Activated CD8-positive, alpha-beta T cell treated with anti-CD3 and anti-CD28 coated beads for 36 hours (primary cell): ENCODE measurements at regions of chr1 and their contacts with region 1.

Region 1: GRCh38 chr1:93304716-93305138 is 41.0 kb upstream of the DR1 start:
- DNase-seq: peak; percentile 61
- ATAC-seq: peak; percentile 53
- H3K4me3 Mint-ChIP-seq: no peak overlapping the region
- H3K27ac Mint-ChIP-seq: no peak overlapping the region
- H3K4me1 Mint-ChIP-seq: no peaks in the 10 kb centered on the region
- H3K27me3 Mint-ChIP-seq: no peaks in the 10 kb centered on the region
- CTCF ChIP-seq: peak; percentile 89

Region 2: GRCh38 chr1:92944901-92945747 is 359.6 kb before region 1 on chr1:
- CTCF ChIA-PET with region 1: no interaction called
- POLR2A ChIA-PET with region 1: no interaction called
- intact Hi-C with region 1: no loop called
- DNase-seq: no peak
- ATAC-seq: no peak
- H3K4me3 Mint-ChIP-seq: no peak overlapping the region
- H3K27ac Mint-ChIP-seq: no peak overlapping the region
- H3K4me1 Mint-ChIP-seq: peaks cover 54% of the 10 kb centered on the region
- H3K27me3 Mint-ChIP-seq: no peaks in the 10 kb centered on the region
- CTCF ChIP-seq: no peak

Region 3: DNA sequence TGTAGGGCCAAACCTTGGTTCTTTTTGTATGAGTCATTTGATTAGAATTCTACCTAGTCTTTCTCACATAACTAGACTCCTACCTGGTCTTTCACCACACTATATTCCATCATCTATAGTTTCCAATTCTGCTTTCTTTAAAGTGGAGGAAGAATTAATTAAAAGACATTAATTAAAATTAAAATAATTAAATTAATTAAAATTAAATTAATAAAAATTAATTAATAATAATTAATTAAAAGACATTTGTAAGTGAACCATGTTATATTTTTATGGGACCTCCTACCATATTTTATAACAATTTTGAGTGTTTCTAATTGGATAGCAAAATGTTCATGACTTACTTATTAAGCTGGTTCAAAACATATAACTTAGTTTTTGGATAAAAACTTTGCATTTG is 46.8 kb before region 1 on chr1:
- CTCF ChIA-PET with region 1: interaction called, 13 read pairs
- POLR2A ChIA-PET with region 1: no interaction called
- intact Hi-C with region 1: no loop called
- DNase-seq: no peak
- ATAC-seq: no peak
- H3K4me3 Mint-ChIP-seq: no peak overlapping the region
- H3K27ac Mint-ChIP-seq: no peak overlapping the region
- H3K4me1 Mint-ChIP-seq: peaks cover 2% of the 10 kb centered on the region
- H3K27me3 Mint-ChIP-seq: no peaks in the 10 kb centered on the region
- CTCF ChIP-seq: no peak

Region 4: GRCh38 chr1:93317207-93317606 is 12.5 kb after region 1 on chr1:
- CTCF ChIA-PET with region 1: interaction called, 25 read pairs
- POLR2A ChIA-PET with region 1: no interaction called
- intact Hi-C with region 1: no loop called
- DNase-seq: no peak
- ATAC-seq: no peak
- H3K4me3 Mint-ChIP-seq: no peak overlapping the region
- H3K27ac Mint-ChIP-seq: no peak overlapping the region
- H3K4me1 Mint-ChIP-seq: peaks cover 2% of the 10 kb centered on the region
- H3K27me3 Mint-ChIP-seq: no peaks in the 10 kb centered on the region
- CTCF ChIP-seq: no peak

Region 5: DNA sequence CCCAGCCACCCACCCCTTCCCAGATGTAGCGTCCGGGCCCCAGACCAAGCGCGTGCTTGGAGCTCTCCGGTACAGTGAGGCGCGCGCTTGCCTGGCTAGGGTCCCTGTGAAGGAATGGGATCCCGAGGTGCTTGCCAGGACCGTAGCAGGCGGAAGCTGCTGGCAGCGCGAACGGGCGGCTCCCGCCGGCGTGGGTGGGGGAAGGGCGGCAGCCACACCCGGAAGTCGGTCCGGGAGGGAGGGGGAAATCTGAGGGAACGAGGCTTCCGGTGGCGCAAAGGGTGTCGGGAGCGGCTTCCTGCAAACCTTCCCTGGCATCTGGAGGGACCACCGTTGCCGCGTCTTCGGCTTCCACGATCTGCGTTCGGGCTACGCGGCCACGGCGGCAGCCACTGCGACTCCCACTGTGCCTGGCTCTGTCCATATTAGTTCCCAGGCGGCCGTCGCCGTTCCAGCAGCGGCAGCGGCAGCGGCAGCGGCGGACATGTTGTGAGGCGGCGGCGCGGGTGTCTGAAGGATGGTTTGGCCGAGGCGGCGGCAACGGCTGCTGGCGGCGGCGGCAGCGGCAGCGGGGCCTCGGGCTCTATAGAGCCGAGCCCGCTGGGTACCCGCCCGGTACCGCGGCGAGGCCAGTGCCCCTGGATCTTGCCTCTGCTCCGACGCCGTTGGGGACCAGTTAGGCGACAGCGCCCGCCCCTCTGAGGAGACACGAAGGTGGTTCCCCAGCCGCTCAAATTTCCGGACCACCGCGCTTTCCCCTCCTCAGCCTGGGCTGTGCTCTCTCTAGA is 41.1 kb after region 1 on chr1 and contains the start of gene DR1:
- CTCF ChIA-PET with region 1: interaction called, 15 read pairs
- POLR2A ChIA-PET with region 1: interaction called, 4 read pairs
- intact Hi-C with region 1: no loop called
- DNase-seq: peak; percentile 92
- ATAC-seq: peak; percentile 84
- H3K4me3 Mint-ChIP-seq: peak within 1 kb of the TSS; percentile 86
- H3K27ac Mint-ChIP-seq: peak within 1 kb of the TSS; percentile 97
- H3K4me1 Mint-ChIP-seq: peaks cover 25% of the 10 kb centered on the region
- H3K27me3 Mint-ChIP-seq: no peaks in the 10 kb centered on the region
- CTCF ChIP-seq: no peak
- total RNA-seq, gene DR1: 71.3 to 79.2 TPM

Region 6: GRCh38 chr1:93374334-93375106 is 69.8 kb after region 1 on chr1:
- CTCF ChIA-PET with region 1: interaction called, 14 read pairs
- POLR2A ChIA-PET with region 1: no interaction called
- intact Hi-C with region 1: no loop called
- DNase-seq: no peak
- ATAC-seq: no peak
- H3K4me3 Mint-ChIP-seq: no peak overlapping the region
- H3K27ac Mint-ChIP-seq: no peak overlapping the region
- H3K4me1 Mint-ChIP-seq: no peaks in the 10 kb centered on the region
- H3K27me3 Mint-ChIP-seq: no peaks in the 10 kb centered on the region
- CTCF ChIP-seq: no peak

Region 7: DNA sequence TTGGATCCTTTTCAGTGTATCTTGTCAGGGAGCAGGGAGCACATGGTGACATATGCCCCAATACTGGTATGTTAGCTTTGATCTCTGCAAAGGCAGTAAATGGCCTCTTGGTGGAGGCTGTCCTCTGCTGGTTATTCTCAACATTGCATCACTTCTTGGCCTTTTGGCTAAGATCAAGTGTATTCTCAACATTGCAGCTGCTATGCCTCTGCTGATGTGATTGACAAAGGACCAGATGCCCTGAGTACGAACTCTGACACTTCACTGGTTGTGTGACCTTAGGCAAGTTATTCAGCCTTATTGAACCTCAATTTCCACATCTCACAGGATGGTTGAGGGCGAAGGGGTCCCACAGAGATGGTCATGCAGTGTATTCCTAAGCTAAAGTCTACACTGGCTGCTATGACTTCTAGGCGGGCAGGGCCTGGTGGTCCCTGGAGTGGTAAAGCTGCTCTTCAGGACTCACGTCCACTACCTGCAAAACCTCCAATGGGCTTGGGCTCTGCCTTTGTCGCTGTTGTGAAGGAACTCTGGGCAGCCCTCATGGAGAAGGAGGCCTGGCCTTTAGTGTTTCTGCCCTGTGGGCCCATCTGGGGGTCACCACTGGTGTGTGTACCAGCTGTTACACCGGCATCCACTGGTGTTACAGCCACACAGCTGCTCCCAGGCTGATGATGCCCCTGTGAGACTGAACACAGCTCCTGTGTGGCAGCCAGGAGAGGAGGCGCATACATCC is 509.5 kb after region 1 on chr1:
- CTCF ChIA-PET with region 1: interaction called, 14 read pairs
- POLR2A ChIA-PET with region 1: no interaction called
- intact Hi-C with region 1: no loop called
- DNase-seq: peak; percentile 69
- ATAC-seq: peak; percentile 76
- H3K4me3 Mint-ChIP-seq: no peak overlapping the region
- H3K27ac Mint-ChIP-seq: no peak overlapping the region
- H3K4me1 Mint-ChIP-seq: peaks cover 17% of the 10 kb centered on the region
- H3K27me3 Mint-ChIP-seq: no peaks in the 10 kb centered on the region
- CTCF ChIP-seq: peak; percentile 84